ENCODE measurements at regions of chr3 and their contacts with region 1.

Region 1: GRCh38 chr3:82000773-82001172 is 239.3 kb upstream of the GBE1 start:
- DNase-seq: no peak
- ATAC-seq: no peak

Region 2: GRCh38 chr3:82850115-82850514 is 849.3 kb after region 1 on chr3:
- intact Hi-C with region 1: loop called (anchors 5 kb)
- DNase-seq: no peak
- ATAC-seq: no peak